ENCODE measurements at regions of chr14 and their contacts with region 1.

Region 1: DNA sequence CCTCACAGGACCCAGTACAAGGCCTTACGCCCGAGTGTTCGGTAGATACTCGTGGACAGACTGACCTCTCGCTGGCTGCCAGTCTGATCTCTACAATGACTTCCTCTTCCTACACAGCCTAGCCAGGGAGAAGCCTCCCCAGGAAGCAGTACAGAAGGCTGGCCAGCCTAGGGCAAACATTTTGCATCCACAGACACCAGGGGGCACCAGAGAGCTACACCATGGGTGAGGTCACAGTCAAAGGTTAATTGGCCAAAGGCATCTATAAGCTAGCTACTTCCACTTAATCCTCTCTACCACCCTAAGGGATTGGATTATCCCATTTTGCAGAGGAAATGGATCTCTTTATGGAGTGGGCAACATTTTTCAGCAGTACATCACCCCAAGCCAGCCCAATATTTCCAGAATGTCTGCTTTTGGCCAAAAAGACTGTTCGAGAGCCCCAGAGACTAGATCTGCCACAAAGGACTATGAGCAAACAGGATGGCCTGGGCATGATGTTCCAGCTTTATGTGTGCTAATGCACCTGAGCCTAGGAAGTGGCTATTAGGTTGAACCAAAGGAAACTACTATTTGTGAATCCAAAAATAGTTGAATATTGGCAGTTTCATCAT is 14.6 kb upstream of the PNMA1 start:
- DNase-seq: peak; percentile 88
- ATAC-seq: peak; percentile 52
- H3K4me3 ChIP-seq: no peak overlapping the region
- H3K27ac ChIP-seq: no peak overlapping the region
- H3K4me1 ChIP-seq: peaks cover 37% of the 10 kb centered on the region
- H3K27me3 ChIP-seq: no peaks in the 10 kb centered on the region
- CTCF ChIP-seq: peak; percentile 94

Region 2: DNA sequence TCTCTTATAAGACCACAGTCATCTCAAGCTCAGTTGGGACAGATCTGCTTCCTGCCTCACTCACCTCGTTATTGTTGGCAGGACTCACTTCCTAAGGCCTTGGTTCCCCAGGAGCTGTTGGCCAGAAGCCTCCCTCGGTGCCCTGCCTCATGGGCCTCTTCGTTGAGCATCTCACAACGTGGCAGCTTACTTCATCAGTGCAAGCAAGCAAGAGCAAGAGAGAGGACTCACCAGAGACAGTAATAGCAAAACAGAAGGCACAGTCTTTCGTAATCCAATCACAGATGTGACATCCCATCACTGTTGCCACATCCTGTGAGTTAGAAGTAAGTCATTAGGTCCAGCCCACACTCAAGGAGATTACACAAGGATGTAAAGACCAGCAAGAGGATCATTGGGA is 265.4 kb before region 1 on chr14:
- CTCF ChIA-PET with region 1: no interaction called
- POLR2A ChIA-PET with region 1: interaction called, 10 read pairs
- intact Hi-C with region 1: no loop called
- DNase-seq: peak; percentile 91
- ATAC-seq: peak; percentile 21
- H3K4me3 ChIP-seq: no peak overlapping the region
- H3K27ac ChIP-seq: peak overlapping the region; percentile 13
- H3K4me1 ChIP-seq: peaks cover 42% of the 10 kb centered on the region
- H3K27me3 ChIP-seq: no peaks in the 10 kb centered on the region
- CTCF ChIP-seq: no peak

Region 3: DNA sequence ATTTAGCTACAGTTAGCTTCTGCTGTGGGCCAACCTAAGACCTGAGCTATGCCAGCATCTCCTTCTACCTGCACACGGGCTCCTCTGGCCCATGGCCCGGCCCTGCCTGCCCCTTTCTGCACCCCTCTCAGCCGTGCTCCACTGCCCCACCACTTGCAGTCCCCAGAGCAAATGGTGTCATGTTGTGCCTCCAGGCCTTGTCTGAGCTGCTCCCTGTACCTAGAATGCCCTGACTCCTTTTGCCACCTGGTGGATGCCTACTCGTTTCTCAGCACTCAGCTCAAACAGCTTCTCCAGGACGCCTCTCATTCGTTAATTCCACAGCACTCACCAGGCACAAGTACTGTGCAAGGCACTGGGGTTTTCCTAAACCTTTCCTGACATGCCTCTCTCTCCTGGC is 48.6 kb after region 1 on chr14:
- CTCF ChIA-PET with region 1: no interaction called
- POLR2A ChIA-PET with region 1: no interaction called
- intact Hi-C with region 1: no loop called
- DNase-seq: no peak
- ATAC-seq: no peak
- H3K4me3 ChIP-seq: no peak overlapping the region
- H3K27ac ChIP-seq: no peak overlapping the region
- H3K4me1 ChIP-seq: no peaks in the 10 kb centered on the region
- H3K27me3 ChIP-seq: no peaks in the 10 kb centered on the region
- CTCF ChIP-seq: no peak

Measured in PC-3 (cell line).